ENCODE measurements at regions of chr4 and their contacts with region 1.

Region 1: DNA sequence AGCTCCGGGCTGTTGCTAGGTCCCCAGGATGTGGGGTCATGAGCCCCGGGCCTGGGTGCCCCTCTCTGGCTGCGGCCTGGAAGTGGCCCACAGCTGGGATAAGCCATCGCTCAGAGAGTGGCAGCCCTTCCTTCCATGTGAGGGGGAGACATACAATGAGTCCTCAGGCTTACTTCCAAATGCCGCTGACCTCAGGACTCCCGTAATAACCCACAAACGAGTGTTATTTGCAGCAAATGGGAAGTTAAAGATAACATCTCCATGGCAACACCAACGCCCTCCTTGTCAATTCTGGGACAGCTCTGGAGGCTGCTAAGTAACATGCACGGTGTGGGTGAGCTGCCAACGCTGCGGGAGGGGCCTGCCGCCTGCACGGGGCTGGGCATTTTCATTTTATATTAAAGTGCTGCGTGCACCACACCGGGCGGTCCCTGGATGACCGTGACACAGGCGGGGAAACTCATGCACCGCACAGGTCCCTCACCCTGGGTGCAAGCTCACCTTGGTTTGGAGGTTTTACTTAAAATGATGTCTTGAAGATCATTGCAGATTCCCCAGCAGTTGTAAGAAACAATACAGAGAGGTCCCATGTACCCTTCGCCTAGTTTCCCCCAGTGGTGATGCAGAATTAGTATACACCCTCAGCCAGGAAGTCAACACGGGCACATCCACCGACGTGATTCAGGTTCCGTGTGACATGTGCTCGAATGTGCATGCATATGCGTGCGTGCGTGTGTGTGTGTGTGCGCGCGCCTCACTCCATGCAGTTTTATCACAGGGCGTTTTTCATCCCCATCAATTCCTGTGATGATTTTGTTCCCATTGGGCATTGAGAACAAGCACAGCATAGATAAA is 79.4 kb downstream of the ABLIM2 start:
- DNase-seq: peak; percentile 63
- H3K4me3 ChIP-seq: no peak overlapping the region
- H3K27ac ChIP-seq: no peak overlapping the region
- H3K4me1 ChIP-seq: peaks cover 28% of the 10 kb centered on the region
- H3K27me3 ChIP-seq: no peaks in the 10 kb centered on the region
- CTCF ChIP-seq: no peak

Region 2: GRCh38 chr4:6909073-6909965 is 1169.9 kb before region 1 on chr4 and contains the start of gene TBC1D14:
- CTCF ChIA-PET with region 1: no interaction called
- POLR2A ChIA-PET with region 1: interaction called, 22 read pairs
- intact Hi-C with region 1: no loop called
- DNase-seq: peak; percentile 92
- H3K4me3 ChIP-seq: peak within 1 kb of the TSS; percentile 89
- H3K27ac ChIP-seq: peak within 1 kb of the TSS; percentile 99
- H3K4me1 ChIP-seq: peaks cover 9% of the 10 kb centered on the region
- H3K27me3 ChIP-seq: no peaks in the 10 kb centered on the region
- CTCF ChIP-seq: no peak
- total RNA-seq, gene TBC1D14: 44.3 and 46.0 TPM in 2 replicates

Region 3: GRCh38 chr4:7744142-7744804 is 335.0 kb before region 1 on chr4:
- CTCF ChIA-PET with region 1: no interaction called
- POLR2A ChIA-PET with region 1: no interaction called
- intact Hi-C with region 1: no loop called
- DNase-seq: no peak
- H3K4me3 ChIP-seq: no peak overlapping the region
- H3K27ac ChIP-seq: no peak overlapping the region
- H3K4me1 ChIP-seq: no peaks in the 10 kb centered on the region
- H3K27me3 ChIP-seq: no peaks in the 10 kb centered on the region
- CTCF ChIP-seq: no peak

Region 4: DNA sequence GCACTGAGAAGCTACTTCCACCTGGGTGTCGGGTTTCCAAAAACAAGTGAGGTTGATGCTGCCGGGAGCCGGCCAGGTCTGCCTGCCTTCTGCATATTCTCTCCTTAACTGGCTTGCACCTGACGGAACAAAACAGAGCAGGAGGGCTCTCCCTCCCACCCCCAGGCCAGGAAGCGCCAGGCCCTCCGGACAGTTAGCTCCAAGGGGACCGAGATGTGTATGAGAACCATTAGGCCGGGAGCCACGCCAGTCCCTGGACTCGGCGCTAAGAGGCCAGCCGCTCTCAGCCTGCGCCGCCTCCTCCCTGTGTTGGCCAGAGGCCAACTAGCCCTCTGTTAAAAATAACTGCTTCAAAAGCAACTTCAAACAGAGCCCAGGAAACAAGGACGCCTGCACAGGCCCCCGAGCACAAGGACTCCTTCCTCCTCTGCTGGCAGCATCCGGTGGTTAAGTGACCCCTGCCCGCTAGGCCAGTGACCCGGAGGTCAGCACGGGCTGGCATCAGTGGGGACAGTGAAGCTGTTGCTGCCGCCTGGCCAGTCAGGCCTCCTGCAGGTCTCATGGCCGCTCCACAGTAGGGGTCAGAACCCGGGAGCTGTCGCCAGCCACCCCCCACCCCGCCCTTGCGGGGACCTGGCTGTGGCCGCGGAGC is 28.6 kb before region 1 on chr4:
- CTCF ChIA-PET with region 1: no interaction called
- POLR2A ChIA-PET with region 1: interaction called, 11 read pairs
- intact Hi-C with region 1: no loop called
- DNase-seq: peak; percentile 50
- H3K4me3 ChIP-seq: no peak overlapping the region
- H3K27ac ChIP-seq: peak overlapping the region; percentile 59
- H3K4me1 ChIP-seq: peaks cover 9% of the 10 kb centered on the region
- H3K27me3 ChIP-seq: no peaks in the 10 kb centered on the region
- CTCF ChIP-seq: no peak

Region 5: GRCh38 chr4:8090744-8091289 is 11.6 kb after region 1 on chr4:
- CTCF ChIA-PET with region 1: no interaction called
- POLR2A ChIA-PET with region 1: interaction called, 11 read pairs
- intact Hi-C with region 1: no loop called
- DNase-seq: no peak
- H3K4me3 ChIP-seq: no peak overlapping the region
- H3K27ac ChIP-seq: no peak overlapping the region
- H3K4me1 ChIP-seq: no peaks in the 10 kb centered on the region
- H3K27me3 ChIP-seq: no peaks in the 10 kb centered on the region
- CTCF ChIP-seq: no peak

Region 6: DNA sequence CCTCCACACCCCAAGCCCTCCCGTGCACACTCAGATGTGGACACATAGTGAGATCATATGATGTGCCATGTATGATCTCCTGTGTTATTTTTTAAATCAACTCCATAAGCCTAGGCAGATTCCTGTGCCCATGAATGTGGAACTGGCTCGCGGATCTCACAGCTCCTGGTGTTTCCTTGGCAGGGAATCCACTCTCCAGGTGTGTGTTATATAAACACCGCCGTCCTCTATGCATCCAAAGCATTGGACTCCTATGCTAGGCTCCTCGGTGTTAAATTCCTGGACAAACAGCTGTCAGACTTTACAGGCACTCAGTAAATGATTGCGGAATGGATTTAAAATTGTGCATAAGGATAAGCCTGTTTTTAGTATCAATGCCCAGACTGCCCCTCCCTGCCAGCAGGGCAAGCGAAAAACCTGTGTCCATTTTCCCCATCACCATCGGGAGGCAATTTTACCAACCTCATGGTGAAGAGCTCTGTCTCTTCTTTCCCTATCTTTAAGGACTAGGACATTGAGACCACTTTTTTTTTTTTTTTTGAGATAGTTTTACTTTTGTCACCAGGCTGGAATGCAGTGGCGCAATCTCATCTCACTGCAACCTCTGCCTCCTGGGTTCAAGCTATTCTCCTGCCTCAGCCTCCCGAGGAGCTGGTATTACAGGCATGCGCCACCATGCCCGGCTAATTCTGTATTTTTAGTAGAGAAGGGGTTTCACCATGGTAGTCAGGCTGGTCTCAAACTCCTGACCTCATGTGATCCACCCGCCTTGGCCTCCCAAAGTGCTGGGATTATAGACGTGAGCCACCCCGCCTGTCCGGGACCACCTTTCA is 477.3 kb after region 1 on chr4:
- CTCF ChIA-PET with region 1: no interaction called
- POLR2A ChIA-PET with region 1: interaction called, 11 read pairs
- intact Hi-C with region 1: no loop called
- DNase-seq: no peak
- H3K4me3 ChIP-seq: no peak overlapping the region
- H3K27ac ChIP-seq: no peak overlapping the region
- H3K4me1 ChIP-seq: no peaks in the 10 kb centered on the region
- H3K27me3 ChIP-seq: no peaks in the 10 kb centered on the region
- CTCF ChIP-seq: no peak

Measured in A673 (cell line).